H1 (cell line): ENCODE measurements at regions of chr3 and their contacts with region 1.

Region 1: GRCh38 chr3:58640700-58641372 is 25.7 kb downstream of the FAM3D start:
- DNase-seq: peak; percentile 73 to 90
- H3K4me3 ChIP-seq: peak overlapping the region in 1 of 4 experiments; percentile 7; a peak in 1 of 8 replicates
- H3K27ac ChIP-seq: no peak overlapping the region
- H3K4me1 ChIP-seq: peaks cover 0 to 4% (median 0%) of the 10 kb centered on the region in 4 experiments; a peak in 3 of 7 replicates
- H3K27me3 ChIP-seq: peaks cover 15 to 53% (median 39%) of the 10 kb centered on the region in 4 experiments
- CTCF ChIP-seq: peak; percentile 92 to 97 (median 94)
- EP300 ChIP-seq: no peak
- POLR2A ChIP-seq: no peak
- RAD21 ChIP-seq: peak; percentile 100

Region 2: DNA sequence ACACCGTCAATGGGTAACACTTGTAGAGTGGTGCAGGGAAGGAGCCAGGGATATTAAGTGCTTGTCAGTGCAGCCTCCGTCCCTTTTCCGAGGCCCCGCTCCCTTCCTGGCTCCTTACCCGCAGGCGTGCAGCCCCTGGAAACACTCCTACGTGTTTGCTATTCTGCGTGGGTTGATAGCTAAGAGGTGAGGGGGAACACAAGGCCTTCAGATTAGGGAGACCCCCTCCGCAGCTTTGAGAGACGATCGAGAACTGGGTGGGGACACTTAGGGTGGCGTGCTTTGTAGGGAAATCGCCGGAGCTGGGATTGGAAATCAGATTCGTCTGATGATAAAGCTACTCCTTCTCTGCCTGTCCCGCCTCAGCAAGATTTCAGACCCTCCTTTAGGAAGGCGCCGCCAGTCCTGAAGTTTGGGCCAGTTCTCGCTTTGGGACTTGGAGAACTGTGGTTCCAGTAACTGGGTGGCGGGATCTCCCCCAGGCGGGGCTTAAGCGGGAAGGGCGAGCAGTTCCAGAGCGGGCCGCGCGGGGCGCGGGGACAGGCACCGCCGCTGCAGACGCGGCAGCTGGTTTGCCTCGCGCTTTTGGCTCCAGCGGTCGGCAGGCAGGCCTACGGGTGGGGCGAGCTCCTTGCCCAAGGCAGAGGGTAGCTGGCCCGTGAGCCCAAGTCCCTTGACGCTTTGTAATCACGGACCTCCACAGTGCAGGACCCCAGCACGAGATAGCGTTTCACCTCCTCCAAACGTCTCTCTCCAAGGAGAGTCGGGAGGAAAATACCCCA is 55.6 kb before region 1 on chr3:
- CTCF ChIA-PET with region 1: interaction called, 994 read pairs
- POLR2A ChIA-PET with region 1: interaction called, 3 read pairs
- DNase-seq: peak in 1 of 2 experiments; percentile 88
- H3K4me3 ChIP-seq: peak overlapping the region; percentile 5 to 47 (median 18); a peak in 6 of 8 replicates
- H3K27ac ChIP-seq: no peak overlapping the region
- H3K4me1 ChIP-seq: peaks cover 5 to 21% (median 12%) of the 10 kb centered on the region in 4 experiments; a peak in 6 of 7 replicates
- H3K27me3 ChIP-seq: peaks cover 7 to 35% (median 31%) of the 10 kb centered on the region in 4 experiments
- CTCF ChIP-seq: peak; percentile 68 to 82 (median 77)
- EP300 ChIP-seq: 0 out of 3 replicates have a peak, but pooled peaks of 1 of the 2 experiments have one; percentile 36
- POLR2A ChIP-seq: no peak
- RAD21 ChIP-seq: peak; percentile 38 to 57

Region 3: GRCh38 chr3:58630076-58630709 is 10.6 kb before region 1 on chr3:
- CTCF ChIA-PET with region 1: interaction called, 59 read pairs
- POLR2A ChIA-PET with region 1: interaction called, 3 read pairs
- DNase-seq: peak; percentile 23 to 96
- H3K4me3 ChIP-seq: no peak overlapping the region
- H3K27ac ChIP-seq: no peak overlapping the region
- H3K4me1 ChIP-seq: peaks cover 0 to 4% (median 0%) of the 10 kb centered on the region in 4 experiments; a peak in 2 of 7 replicates
- H3K27me3 ChIP-seq: peaks cover under 1 to 25% (median 5%) of the 10 kb centered on the region in 4 experiments; a peak in 6 of 7 replicates
- CTCF ChIP-seq: peak; percentile 70 to 92 (median 89)
- EP300 ChIP-seq: no peak
- POLR2A ChIP-seq: no peak
- RAD21 ChIP-seq: peak; percentile 92 to 93

Region 4: DNA sequence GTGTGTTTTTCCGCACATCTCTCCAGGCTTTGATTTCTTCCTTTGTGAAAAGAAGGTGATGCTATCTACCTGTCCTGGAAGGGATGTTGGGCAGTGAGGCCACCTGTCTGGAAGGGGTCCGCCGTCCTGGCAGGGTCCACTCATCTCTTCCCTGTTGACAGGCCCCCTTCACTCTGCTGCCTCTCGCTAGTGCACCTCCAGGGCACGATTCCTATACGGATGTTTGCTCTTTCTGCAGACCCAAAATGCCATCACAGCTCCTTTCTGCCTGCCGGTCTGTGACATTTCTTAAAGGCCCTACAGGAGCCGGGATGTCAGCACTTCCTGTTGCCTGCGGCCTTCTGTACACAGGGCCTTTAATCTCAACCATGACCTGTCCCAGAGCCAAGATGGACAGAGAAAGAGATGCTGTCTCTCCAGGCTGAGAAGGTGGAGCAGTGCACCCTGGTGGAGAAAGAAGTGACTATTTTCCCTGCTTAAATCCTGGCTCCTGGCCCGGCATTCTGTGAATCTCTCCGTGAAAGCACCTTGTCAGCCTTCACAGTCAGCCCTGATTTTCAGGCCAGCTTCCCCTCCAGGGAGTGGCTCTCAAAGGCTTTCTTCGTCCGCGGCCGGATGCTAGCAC is 18.3 kb after region 1 on chr3:
- CTCF ChIA-PET with region 1: interaction called, 66 read pairs
- POLR2A ChIA-PET with region 1: no interaction called
- DNase-seq: peak; percentile 25 to 55
- H3K4me3 ChIP-seq: no peak overlapping the region
- H3K27ac ChIP-seq: no peak overlapping the region
- H3K4me1 ChIP-seq: no peaks in the 10 kb centered on the region
- H3K27me3 ChIP-seq: no peaks in the 10 kb centered on the region
- CTCF ChIP-seq: peak; percentile 52 to 77 (median 66)
- EP300 ChIP-seq: no peak
- POLR2A ChIP-seq: no peak
- RAD21 ChIP-seq: peak; percentile 67 to 75

Region 5: GRCh38 chr3:58665410-58665809 is 24.6 kb after region 1 on chr3:
- CTCF ChIA-PET with region 1: interaction called, 66 read pairs
- POLR2A ChIA-PET with region 1: no interaction called
- DNase-seq: no peak
- H3K4me3 ChIP-seq: no peak overlapping the region
- H3K27ac ChIP-seq: no peak overlapping the region
- H3K4me1 ChIP-seq: no peaks in the 10 kb centered on the region
- H3K27me3 ChIP-seq: no peaks in the 10 kb centered on the region
- CTCF ChIP-seq: no peak
- EP300 ChIP-seq: no peak
- POLR2A ChIP-seq: no peak
- RAD21 ChIP-seq: no peak